ENCODE measurements at regions of chr13 and their contacts with region 1.

Region 1: GRCh38 chr13:76822698-76823267 is 63.4 kb downstream of the KCTD12 start:
- DNase-seq: no peak
- H3K4me3 ChIP-seq: no peak overlapping the region
- H3K27ac ChIP-seq: no peak overlapping the region
- H3K4me1 ChIP-seq: no peaks in the 10 kb centered on the region
- H3K27me3 ChIP-seq: peaks cover 5% of the 10 kb centered on the region
- CTCF ChIP-seq: peak; percentile 28 to 44 (median 42)

Region 2: DNA sequence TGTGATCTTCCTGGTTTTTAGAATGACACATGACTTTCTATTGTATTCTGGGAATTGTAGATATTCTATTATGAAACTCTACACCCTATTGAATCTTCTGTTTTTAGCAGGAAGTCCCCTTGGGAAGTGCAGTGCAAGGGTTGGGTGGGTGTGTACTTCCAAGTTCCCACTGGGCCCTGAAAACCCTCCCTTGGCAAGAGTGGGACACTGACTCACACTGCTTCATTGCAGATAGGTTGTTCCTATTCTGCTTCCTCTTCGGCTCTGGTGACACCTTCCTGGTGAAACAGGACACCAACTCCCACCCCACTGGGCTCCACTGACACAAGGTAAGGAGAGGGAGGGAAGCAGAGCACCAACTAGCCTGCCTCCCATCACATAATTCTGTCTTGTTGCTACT is 58.4 kb before region 1 on chr13:
- dilution Hi-C with region 1: no loop called
- DNase-seq: no peak
- H3K4me3 ChIP-seq: no peak overlapping the region
- H3K27ac ChIP-seq: no peak overlapping the region
- H3K4me1 ChIP-seq: no peaks in the 10 kb centered on the region
- H3K27me3 ChIP-seq: no peaks in the 10 kb centered on the region
- CTCF ChIP-seq: no peak

Region 3: GRCh38 chr13:76903544-76904162 is 80.9 kb after region 1 on chr13:
- dilution Hi-C with region 1: loop called (anchors 10 kb)
- DNase-seq: peak; percentile 41
- H3K4me3 ChIP-seq: no peak overlapping the region
- H3K27ac ChIP-seq: no peak overlapping the region
- H3K4me1 ChIP-seq: no peaks in the 10 kb centered on the region
- H3K27me3 ChIP-seq: peaks cover 6% of the 10 kb centered on the region
- CTCF ChIP-seq: peak; percentile 93 to 99 (median 99)